Activated naive CD4-positive, alpha-beta T cell treated with anti-CD3 and anti-CD28 coated beads, Interleukin-2, amount 10 ng/mL, durations not matched to agents 7 days and 5 days (primary cell): ENCODE measurements at regions of chr7 and their contacts with region 1.

Region 1: DNA sequence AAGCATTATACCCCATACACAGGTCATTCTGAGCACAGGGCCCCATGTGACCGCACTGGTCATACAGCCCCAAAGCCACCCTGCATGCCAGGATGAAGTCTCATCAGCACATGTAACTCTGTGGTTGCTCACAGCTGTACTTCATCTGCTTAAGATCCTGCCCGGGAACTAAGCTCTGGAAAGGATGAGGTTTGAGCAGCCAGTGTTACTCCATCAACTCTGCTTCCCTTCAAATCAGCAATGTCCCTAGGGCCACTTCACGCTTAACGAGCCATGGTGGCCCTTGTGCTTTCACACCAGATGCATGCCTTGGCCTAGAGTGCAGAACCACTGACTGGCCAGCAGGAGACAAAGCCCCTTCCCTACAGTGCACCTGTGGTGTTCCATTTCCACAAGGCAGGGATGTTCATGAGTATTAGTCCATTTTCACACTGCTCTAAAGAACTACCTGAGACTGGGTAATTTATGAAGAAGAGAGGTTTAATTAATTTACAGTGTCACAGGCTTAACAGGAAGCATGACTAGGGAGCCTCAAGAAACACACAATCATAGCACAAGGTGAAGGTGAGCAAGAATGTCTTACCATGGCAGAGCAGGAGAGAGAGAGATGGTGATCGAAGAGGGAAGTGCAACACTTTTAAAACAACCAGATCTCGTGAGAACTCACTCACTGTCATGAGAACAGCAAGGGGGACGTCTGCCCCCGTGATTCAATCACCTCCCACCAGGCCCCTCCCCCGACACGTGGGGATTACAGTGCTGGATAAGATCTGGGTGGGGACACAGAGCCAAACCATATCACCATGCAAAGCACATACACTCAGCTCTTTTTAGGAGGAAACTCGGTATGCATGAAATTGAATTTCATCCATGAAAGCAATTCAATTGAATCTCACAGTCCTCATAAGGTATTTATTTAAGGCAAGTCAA is 149.0 kb upstream of the CDCA7L start:
- DNase-seq: no peak
- H3K4me3 Mint-ChIP-seq: no peak overlapping the region
- H3K27ac Mint-ChIP-seq: no peak overlapping the region
- H3K4me1 Mint-ChIP-seq: no peaks in the 10 kb centered on the region
- H3K27me3 Mint-ChIP-seq: peaks cover 26% of the 10 kb centered on the region

Region 2: DNA sequence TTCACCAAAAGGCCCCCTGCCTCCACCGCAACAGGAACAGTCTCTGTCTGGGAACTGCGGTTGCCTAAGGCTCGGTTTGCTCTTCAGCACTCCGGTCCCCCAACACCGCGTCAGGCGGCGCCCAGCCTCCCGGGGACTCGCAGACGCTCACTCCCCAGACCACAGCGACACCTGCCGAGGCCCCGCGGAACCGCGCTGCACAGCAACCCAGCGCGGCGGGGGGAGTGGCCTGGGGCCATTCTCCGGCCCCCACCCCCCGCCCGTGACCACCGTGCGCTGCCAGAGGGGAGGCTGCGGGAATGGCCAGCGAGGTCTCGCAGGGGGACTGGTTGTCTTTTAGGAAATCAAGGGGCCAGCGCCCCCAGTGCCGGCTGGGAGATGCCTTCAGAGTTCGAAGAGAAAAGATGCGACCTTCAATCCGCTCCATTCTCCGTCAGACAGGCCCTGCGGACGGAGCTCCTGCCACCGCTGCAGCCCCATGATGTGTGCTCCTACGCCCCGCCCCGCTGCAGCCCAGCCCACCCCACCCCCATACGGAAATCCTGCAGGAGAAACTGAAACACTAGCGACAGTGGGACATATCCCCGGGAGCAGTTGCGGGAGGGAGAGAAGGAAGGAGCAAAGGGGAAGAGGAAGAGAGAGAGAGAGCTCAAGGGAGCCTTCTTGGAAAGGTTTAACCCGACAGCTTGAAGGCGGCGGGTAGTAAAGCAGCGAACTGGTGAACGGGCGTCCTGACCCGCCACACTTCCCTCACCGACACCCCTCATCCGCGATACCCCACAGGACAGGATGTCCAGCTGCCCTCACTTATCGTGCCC is 11.6 kb before region 1 on chr7:
- CTCF ChIA-PET with region 1: interaction called, 23 read pairs
- DNase-seq: peak; percentile 87
- H3K4me3 Mint-ChIP-seq: peak overlapping the region; percentile 74
- H3K27ac Mint-ChIP-seq: peak overlapping the region; percentile 64
- H3K4me1 Mint-ChIP-seq: peaks cover 12% of the 10 kb centered on the region
- H3K27me3 Mint-ChIP-seq: peaks cover 50% of the 10 kb centered on the region

Region 3: GRCh38 chr7:22117222-22117621 is 22.5 kb after region 1 on chr7:
- CTCF ChIA-PET with region 1: no interaction called
- DNase-seq: no peak
- H3K4me3 Mint-ChIP-seq: no peak overlapping the region
- H3K27ac Mint-ChIP-seq: no peak overlapping the region
- H3K4me1 Mint-ChIP-seq: peaks cover 7% of the 10 kb centered on the region
- H3K27me3 Mint-ChIP-seq: peaks cover 15% of the 10 kb centered on the region

Region 4: GRCh38 chr7:22262538-22262937 is 167.9 kb after region 1 on chr7:
- CTCF ChIA-PET with region 1: no interaction called
- DNase-seq: no peak
- H3K4me3 Mint-ChIP-seq: no peak overlapping the region
- H3K27ac Mint-ChIP-seq: no peak overlapping the region
- H3K4me1 Mint-ChIP-seq: no peaks in the 10 kb centered on the region
- H3K27me3 Mint-ChIP-seq: peaks cover under 1% of the 10 kb centered on the region

Region 5: DNA sequence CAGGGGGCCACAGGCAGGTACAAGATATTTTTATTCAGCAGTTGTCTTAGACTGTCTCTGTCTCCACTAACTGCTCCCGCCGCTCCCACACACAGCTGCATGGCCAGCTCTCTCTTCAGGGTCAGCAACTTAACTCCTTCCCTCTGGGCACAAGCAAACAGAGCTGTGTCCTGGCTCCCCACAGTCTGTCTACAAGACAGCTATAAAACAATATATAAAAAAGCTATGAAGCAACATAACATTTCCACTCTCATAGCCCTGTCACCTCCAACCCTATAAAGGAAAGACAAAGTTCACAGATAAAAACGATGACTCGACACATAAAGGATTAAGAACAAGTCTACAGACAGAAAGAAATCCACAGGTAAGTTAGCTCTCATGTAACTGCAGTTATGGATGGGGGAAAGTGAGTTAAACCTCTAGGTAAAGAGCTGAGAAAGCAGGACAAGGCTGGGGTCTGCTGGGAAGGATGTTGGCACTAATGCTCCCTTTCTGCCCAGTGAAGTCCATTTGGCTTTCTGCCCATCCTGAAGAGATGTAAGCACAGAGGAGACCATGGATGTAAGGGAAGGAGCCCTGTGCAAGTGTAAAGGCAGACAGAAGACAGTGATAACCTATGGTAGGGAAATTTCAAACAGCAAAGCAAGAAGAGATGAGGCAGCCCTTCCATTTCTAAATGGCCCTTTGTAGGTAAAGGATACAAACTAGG is 235.3 kb after region 1 on chr7:
- CTCF ChIA-PET with region 1: no interaction called
- DNase-seq: no peak
- H3K4me3 Mint-ChIP-seq: no peak overlapping the region
- H3K27ac Mint-ChIP-seq: no peak overlapping the region
- H3K4me1 Mint-ChIP-seq: no peaks in the 10 kb centered on the region
- H3K27me3 Mint-ChIP-seq: peaks cover 18% of the 10 kb centered on the region